SK-N-SH (cell line): ENCODE measurements at regions of chr12 and their contacts with region 1.

Region 1: GRCh38 chr12:130013771-130014484 is 110.1 kb upstream of the TMEM132D start:
- DNase-seq: peak; percentile 89
- H3K4me3 ChIP-seq: no peak overlapping the region
- H3K27ac ChIP-seq: no peak overlapping the region
- H3K4me1 ChIP-seq: no peaks in the 10 kb centered on the region; a peak in 1 of 4 replicates
- H3K27me3 ChIP-seq: no peaks in the 10 kb centered on the region
- CTCF ChIP-seq: peak; percentile 37
- EP300 ChIP-seq: no peak
- RAD21 ChIP-seq: peak; percentile 72

Region 2: GRCh38 chr12:129966146-129966995 is 47.6 kb before region 1 on chr12:
- CTCF ChIA-PET with region 1: interaction called, 11 read pairs
- POLR2A ChIA-PET with region 1: no interaction called
- DNase-seq: no peak
- H3K4me3 ChIP-seq: no peak overlapping the region
- H3K27ac ChIP-seq: no peak overlapping the region
- H3K4me1 ChIP-seq: no peaks in the 10 kb centered on the region
- H3K27me3 ChIP-seq: no peaks in the 10 kb centered on the region
- CTCF ChIP-seq: no peak
- EP300 ChIP-seq: no peak
- RAD21 ChIP-seq: no peak

Region 3: DNA sequence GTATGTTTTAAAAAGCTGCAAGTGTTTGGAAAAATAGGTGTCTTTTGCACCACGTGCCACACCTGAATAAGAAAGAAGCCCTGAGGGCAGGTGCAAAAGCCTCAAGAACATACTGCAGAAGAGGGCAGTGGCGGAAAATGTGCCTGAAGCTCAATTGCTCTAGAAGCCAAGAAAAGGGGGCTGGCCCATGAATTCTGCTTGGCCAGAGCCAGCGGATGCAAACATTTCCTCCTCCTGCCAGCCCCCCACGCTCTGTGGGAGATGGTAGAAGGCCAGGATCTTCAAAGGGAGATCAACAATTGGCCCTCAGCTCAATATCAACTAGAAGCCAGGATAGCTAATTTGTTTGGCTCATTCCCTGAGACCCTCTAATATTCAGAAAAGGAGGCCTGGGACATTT is 29.8 kb before region 1 on chr12:
- CTCF ChIA-PET with region 1: interaction called, 12 read pairs
- POLR2A ChIA-PET with region 1: no interaction called
- DNase-seq: no peak
- H3K4me3 ChIP-seq: no peak overlapping the region
- H3K27ac ChIP-seq: no peak overlapping the region
- H3K4me1 ChIP-seq: no peaks in the 10 kb centered on the region
- H3K27me3 ChIP-seq: no peaks in the 10 kb centered on the region
- CTCF ChIP-seq: no peak
- EP300 ChIP-seq: no peak
- RAD21 ChIP-seq: no peak

Region 4: DNA sequence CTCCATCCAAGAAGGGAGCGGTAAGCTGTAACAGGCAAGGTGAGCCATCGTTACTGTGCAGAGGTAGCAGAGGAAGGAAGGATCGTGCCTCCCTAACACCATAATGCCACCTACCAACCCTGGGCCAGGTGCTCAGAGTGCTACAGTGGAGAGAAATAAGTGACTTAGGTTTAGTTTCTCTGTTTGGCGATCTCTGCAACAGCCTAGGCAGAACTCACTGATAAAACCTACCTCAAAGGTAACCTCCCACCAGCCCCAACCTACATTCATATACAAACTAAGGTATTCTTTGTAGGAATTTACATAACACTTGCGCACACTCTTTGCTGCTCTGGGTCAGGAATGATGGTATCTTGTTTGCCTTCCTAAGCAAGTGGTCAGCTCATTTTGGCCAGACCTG is 16.7 kb before region 1 on chr12:
- CTCF ChIA-PET with region 1: interaction called, 18 read pairs
- POLR2A ChIA-PET with region 1: no interaction called
- DNase-seq: no peak
- H3K4me3 ChIP-seq: no peak overlapping the region
- H3K27ac ChIP-seq: no peak overlapping the region
- H3K4me1 ChIP-seq: no peaks in the 10 kb centered on the region
- H3K27me3 ChIP-seq: no peaks in the 10 kb centered on the region
- CTCF ChIP-seq: no peak
- EP300 ChIP-seq: no peak
- RAD21 ChIP-seq: no peak

Region 5: DNA sequence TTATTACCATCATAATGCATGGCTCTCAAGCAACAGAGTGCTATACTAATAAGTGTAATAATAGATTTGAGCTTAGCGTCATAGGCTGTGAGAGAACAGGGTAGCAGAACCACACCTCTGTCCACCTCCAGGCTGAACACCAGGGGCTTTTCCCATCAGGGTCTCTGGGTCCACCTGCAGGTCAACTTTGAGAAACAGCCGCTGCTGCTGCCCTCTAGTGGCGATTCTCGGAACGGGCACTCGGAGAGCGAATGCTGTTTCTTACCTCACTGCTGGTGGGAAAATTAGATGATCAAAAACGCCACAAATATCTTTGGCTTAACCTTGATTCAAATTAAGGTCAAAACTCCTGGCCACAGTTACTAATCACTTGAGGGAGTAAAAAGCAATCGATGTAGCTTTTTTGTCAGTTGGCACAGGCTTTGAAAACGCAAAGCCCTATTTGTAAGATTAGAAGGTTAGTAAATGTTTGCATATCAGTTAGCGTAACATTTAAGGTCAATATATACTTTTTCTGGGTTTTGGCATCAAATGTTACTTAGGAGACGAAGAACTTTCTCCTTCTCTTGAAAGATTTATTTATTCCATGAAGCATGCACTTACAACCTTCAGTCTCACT is 17.8 kb after region 1 on chr12:
- CTCF ChIA-PET with region 1: interaction called, 105 read pairs
- POLR2A ChIA-PET with region 1: no interaction called
- DNase-seq: peak; percentile 82
- H3K4me3 ChIP-seq: no peak overlapping the region
- H3K27ac ChIP-seq: no peak overlapping the region
- H3K4me1 ChIP-seq: no peaks in the 10 kb centered on the region
- H3K27me3 ChIP-seq: no peaks in the 10 kb centered on the region
- CTCF ChIP-seq: peak; percentile 71
- EP300 ChIP-seq: no peak
- RAD21 ChIP-seq: peak; percentile 47